IMR-90 (cell line): ENCODE measurements at regions of chr12 and their contacts with region 1.

Region 1: DNA sequence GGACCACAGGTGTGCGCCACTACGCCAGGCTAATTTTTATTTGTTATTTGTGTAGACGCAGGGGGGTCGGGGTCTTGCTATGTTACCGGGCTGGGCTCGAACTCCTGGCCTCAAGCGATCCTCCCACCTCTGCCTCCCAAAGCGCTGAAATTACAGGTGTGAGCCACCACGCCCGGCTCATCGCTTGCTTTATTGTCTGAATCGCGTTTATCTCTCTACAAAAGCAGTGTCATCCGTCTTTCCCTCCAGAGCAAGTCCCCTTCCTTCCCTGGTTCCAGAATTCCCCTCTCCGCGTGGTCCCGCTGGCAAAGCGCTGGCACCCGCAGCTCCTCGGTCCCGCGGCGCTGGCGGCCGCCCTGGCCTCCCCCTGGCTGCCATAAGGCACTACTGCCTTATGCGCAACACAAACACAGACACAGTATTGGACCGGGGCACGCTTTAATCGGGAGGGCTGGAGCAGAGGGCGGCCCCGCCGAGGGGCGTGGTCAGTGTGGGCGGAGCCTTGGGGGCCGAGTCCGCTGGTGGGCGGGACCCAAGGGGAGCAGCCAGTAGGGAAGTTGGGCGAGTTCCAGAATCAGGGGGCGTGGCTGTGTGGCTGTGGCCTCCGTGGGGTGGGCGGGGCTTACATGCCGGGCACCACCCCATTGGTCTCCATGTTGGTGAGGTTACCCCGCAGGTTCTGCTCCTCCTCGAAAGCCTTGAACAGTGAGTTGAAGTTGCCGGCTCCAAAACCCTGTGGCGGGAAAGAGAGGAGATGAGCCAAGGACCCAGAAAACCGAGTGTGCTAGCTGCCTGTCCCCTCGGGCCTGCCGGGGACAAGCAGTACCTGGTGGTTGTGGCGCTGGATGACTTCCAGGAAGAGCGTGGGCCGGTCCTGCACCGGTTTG is 19.3 kb downstream of the HPD start:
- DNase-seq: peak; percentile 96
- ATAC-seq: peak; percentile 100
- H3K4me3 ChIP-seq: peak overlapping the region; percentile 71
- H3K27ac ChIP-seq: peak overlapping the region; percentile 45; the same call in 1 of the 2 replicates
- H3K4me1 ChIP-seq: 0 out of 2 replicates have a peak, but pooled peaks cover 2% of the 10 kb centered on the region
- H3K27me3 ChIP-seq: no peaks in the 10 kb centered on the region
- CTCF ChIP-seq: peak; percentile 38
- POLR2A ChIP-seq: no peak; the same call in 1 of the 2 replicates
- RAD21 ChIP-seq: no peak

Region 2: DNA sequence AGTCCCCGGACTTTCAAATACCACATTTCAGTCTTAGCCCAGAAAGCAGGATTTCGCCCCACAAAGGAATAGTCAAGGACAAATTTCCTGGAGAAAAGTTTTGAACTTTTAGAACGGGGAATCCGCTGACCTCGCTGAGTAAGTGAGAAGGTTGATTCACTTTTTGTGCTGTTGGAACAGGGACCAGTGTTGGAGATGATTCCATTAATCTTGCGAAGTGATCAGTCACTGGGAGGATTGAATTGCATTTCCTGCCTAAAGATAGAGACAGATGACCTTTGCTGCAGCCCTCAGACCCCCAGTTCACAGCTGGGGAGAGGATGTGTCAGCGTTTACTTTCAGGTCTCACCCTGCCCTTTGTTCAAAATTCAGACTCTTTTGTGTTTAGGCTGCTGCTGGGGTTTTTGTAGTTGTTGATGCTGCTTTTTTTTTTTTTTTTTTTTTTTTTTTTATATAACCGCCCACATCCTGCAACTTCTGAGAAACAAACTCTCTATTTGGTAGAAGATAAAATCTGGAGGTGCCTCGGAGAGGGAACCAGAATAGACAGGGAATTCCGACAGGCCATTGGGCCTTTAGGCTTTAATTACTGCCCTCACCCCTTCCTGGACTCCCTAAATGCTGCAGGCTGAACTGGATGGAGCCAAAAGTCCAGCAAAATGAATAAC is 248.7 kb before region 1 on chr12:
- CTCF ChIA-PET with region 1: no interaction called
- POLR2A ChIA-PET with region 1: no interaction called
- dilution Hi-C with region 1: no loop called
- in situ Hi-C with region 1: no loop called
- intact Hi-C with region 1: no loop called
- DNase-seq: peak; percentile 69
- ATAC-seq: peak; percentile 64
- H3K4me3 ChIP-seq: peak overlapping the region; percentile 4; the same call in 1 of the 2 replicates
- H3K27ac ChIP-seq: peak overlapping the region; percentile 92
- H3K4me1 ChIP-seq: peaks cover 5% of the 10 kb centered on the region
- H3K27me3 ChIP-seq: no peaks in the 10 kb centered on the region
- CTCF ChIP-seq: no peak
- POLR2A ChIP-seq: no peak
- RAD21 ChIP-seq: no peak

Region 3: GRCh38 chr12:121849665-121850064 is 10.3 kb after region 1 on chr12:
- CTCF ChIA-PET with region 1: no interaction called
- POLR2A ChIA-PET with region 1: no interaction called
- dilution Hi-C with region 1: no loop called
- in situ Hi-C with region 1: no loop called
- intact Hi-C with region 1: no loop called
- DNase-seq: no peak
- ATAC-seq: no peak
- H3K4me3 ChIP-seq: no peak overlapping the region
- H3K27ac ChIP-seq: no peak overlapping the region
- H3K4me1 ChIP-seq: no peaks in the 10 kb centered on the region
- H3K27me3 ChIP-seq: no peaks in the 10 kb centered on the region; the same call in 1 of the 2 replicates
- CTCF ChIP-seq: no peak
- POLR2A ChIP-seq: no peak
- RAD21 ChIP-seq: no peak

Region 4: DNA sequence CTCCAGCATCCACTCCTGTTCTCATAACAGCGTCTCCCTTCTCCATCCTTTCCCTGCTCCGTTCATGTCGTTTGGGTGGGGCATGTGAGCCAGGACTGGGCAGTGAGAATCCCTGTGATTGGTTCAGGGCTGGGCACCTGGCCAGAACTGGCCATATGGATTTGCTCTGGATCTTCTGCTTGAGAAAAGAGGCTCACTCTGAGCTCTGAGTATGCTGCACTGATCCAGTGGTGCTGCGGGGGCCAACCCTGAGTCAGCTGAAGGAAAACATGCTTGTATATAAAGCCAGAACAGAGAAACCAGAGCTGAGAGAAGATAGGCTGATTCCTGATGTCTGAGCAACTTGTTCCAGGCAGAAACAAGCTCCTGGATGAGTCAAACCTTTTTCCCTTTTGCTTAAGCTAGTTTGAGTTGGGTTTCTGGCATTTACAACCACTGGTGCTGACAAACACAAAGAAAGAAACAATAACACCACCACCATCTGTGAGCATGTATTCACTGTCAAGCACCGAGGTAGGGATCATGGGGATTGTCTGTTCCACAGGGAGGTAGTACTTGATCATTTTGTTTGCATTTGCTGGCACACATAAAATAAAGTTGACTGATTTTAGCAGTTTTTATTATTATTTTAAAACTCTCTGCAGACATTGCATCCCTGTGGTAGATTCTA is 33.3 kb after region 1 on chr12:
- CTCF ChIA-PET with region 1: no interaction called
- POLR2A ChIA-PET with region 1: no interaction called
- dilution Hi-C with region 1: no loop called
- in situ Hi-C with region 1: no loop called
- intact Hi-C with region 1: loop called (anchors 5 kb)
- DNase-seq: peak; percentile 99
- ATAC-seq: peak; percentile 99
- H3K4me3 ChIP-seq: no peak overlapping the region
- H3K27ac ChIP-seq: peak overlapping the region; percentile 94
- H3K4me1 ChIP-seq: peaks cover 4% of the 10 kb centered on the region
- H3K27me3 ChIP-seq: no peaks in the 10 kb centered on the region
- CTCF ChIP-seq: no peak
- POLR2A ChIP-seq: no peak
- RAD21 ChIP-seq: peak; percentile 1; the same call in 1 of the 2 replicates